Mammary epithelial cell (primary cell): ENCODE measurements at regions of chr16 and their contacts with region 1.

Region 1: GRCh38 chr16:14285513-14286385 is 214.6 kb downstream of the MRTFB start:
- DNase-seq: peak; percentile 88
- H3K4me3 ChIP-seq: peak overlapping the region; percentile 77 to 94 (median 87)
- H3K27ac ChIP-seq: peak overlapping the region; percentile 31
- H3K4me1 ChIP-seq: peaks cover 6% of the 10 kb centered on the region
- H3K27me3 ChIP-seq: no peaks in the 10 kb centered on the region
- CTCF ChIP-seq: no peak

Region 2: GRCh38 chr16:13269905-13270528 is 1015.7 kb before region 1 on chr16:
- CTCF ChIA-PET with region 1: no interaction called
- dilution Hi-C with region 1: no loop called
- in situ Hi-C with region 1: no loop called
- intact Hi-C with region 1: no loop called
- DNase-seq: no peak
- H3K4me3 ChIP-seq: no peak overlapping the region
- H3K27ac ChIP-seq: no peak overlapping the region
- H3K4me1 ChIP-seq: no peaks in the 10 kb centered on the region
- H3K27me3 ChIP-seq: no peaks in the 10 kb centered on the region
- CTCF ChIP-seq: no peak

Region 3: DNA sequence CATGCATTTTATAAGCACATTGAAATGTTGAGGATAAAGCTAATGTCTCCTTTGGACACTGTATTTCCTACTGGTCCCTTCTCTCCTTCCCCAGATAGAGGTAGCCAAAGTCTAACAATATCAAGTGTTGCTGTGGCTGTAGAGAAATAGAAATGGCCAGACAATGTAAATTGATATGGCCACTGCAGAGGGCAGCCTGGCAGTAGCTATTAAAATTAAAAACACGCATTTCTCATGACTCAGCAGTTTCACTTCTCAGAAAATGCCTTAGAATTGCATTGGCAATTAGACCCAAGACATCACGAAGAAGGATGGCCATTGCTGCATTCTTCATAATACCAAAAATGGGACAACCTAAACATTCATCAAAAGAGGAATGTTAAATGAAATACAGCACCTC is 261.4 kb before region 1 on chr16:
- CTCF ChIA-PET with region 1: no interaction called
- dilution Hi-C with region 1: no loop called
- in situ Hi-C with region 1: no loop called
- intact Hi-C with region 1: loop called (anchors 5 kb)
- DNase-seq: no peak
- H3K4me3 ChIP-seq: no peak overlapping the region
- H3K27ac ChIP-seq: no peak overlapping the region
- H3K4me1 ChIP-seq: no peaks in the 10 kb centered on the region
- H3K27me3 ChIP-seq: no peaks in the 10 kb centered on the region
- CTCF ChIP-seq: no peak

Region 4: GRCh38 chr16:14088155-14088753 is 197.5 kb before region 1 on chr16:
- CTCF ChIA-PET with region 1: no interaction called
- dilution Hi-C with region 1: no loop called
- in situ Hi-C with region 1: no loop called
- intact Hi-C with region 1: loop called (anchors 5 kb)
- DNase-seq: no peak
- H3K4me3 ChIP-seq: no peak overlapping the region
- H3K27ac ChIP-seq: no peak overlapping the region
- H3K4me1 ChIP-seq: no peaks in the 10 kb centered on the region
- H3K27me3 ChIP-seq: no peaks in the 10 kb centered on the region
- CTCF ChIP-seq: no peak

Region 5: DNA sequence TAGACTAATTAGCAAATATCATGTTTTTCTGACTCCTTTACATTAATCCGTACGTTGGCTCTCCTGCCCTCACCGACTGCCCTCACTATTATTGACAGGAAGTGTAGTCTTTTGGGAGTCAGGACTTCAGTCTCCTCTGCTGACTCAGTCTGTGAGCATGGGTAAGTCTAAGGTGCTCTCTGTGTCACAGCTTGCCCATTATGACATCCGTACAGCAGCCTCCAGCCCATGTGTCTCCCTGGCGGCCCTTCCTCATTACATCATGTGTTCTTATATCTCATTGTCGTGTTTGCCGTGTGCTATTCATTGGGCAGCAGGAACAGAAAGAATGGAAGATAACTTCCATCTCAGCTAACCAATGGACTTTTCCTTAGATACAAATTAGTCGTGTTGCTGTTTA is 137.2 kb before region 1 on chr16:
- CTCF ChIA-PET with region 1: no interaction called
- dilution Hi-C with region 1: no loop called
- in situ Hi-C with region 1: no loop called
- intact Hi-C with region 1: no loop called
- DNase-seq: peak; percentile 41
- H3K4me3 ChIP-seq: no peak overlapping the region
- H3K27ac ChIP-seq: no peak overlapping the region
- H3K4me1 ChIP-seq: peaks cover 5% of the 10 kb centered on the region
- H3K27me3 ChIP-seq: no peaks in the 10 kb centered on the region
- CTCF ChIP-seq: no peak